PC-9 (cell line): ENCODE measurements at regions of chr18 and their contacts with region 1.

Region 1: DNA sequence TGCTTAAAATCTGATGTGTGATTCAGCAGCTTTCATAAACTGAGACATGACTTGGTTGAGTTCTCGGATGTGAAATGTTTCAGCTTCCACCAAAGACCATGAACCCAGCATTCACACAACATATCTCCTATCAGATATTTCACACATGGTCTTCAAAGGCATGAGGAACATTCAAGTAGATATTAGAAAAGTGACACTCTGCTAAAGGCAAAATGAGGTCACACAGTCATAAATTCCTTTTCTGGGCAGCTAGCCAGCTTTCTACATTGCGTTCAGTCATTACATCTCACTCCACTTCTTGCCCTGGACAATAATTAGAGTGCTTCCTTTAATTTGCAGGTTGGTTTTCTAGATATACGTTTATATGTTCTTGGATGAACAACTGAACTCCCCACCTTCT is 96.7 kb downstream of the GAREM1 start:
- DNase-seq: peak; percentile 32 to 78
- H3K4me3 ChIP-seq: peak overlapping the region; percentile 6; the same call in 1 of the 2 replicates
- H3K27ac ChIP-seq: peak overlapping the region; percentile 97
- H3K4me1 ChIP-seq: peaks cover 73% of the 10 kb centered on the region
- H3K27me3 ChIP-seq: no peaks in the 10 kb centered on the region
- CTCF ChIP-seq: no peak

Region 2: DNA sequence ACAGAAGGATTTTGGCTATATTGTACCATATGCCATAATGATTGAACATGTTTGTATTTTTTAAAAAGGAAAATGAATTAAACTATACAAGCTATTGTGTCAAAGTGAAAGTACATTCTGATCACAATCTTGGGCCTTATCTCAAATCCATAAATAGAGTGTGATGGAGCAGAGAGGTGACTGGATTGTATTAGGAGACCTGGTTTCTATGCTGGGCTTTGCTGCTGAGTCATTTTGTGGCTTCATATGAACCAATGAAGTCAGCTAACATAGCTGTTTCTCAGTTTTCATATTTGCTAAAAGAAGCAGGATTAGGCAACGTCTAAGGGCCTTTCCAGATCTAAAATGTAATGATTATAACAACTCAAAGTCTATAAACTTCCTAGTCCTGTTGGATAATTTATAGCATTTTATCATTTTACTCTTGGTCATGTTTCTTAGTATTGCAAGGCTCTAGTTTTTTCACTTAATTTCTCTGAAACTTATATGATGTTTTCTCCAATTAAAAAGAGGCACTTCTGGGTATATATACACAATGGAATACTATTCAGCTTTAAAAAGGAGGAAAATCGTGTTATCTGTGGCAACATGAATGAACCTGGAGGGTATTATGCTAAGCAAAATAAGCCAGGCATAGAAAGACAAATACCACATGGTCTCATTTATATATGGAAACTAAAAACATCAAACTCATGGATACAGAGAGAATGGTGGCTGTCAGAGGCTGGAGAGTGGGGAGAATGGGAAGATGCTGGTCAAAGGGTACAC is 71.8 kb before region 1 on chr18:
- CTCF ChIA-PET with region 1: no interaction called
- POLR2A ChIA-PET with region 1: no interaction called
- intact Hi-C with region 1: loop called (anchors 2 kb)
- DNase-seq: peak; percentile 24 to 84
- H3K4me3 ChIP-seq: no peak overlapping the region
- H3K27ac ChIP-seq: peak overlapping the region; percentile 84
- H3K4me1 ChIP-seq: peaks cover 20% of the 10 kb centered on the region
- H3K27me3 ChIP-seq: no peaks in the 10 kb centered on the region
- CTCF ChIP-seq: no peak

Region 3: GRCh38 chr18:32455361-32455760 is 81.4 kb after region 1 on chr18:
- CTCF ChIA-PET with region 1: no interaction called
- POLR2A ChIA-PET with region 1: no interaction called
- intact Hi-C with region 1: no loop called
- DNase-seq: no peak
- H3K4me3 ChIP-seq: no peak overlapping the region
- H3K27ac ChIP-seq: no peak overlapping the region
- H3K4me1 ChIP-seq: no peaks in the 10 kb centered on the region
- H3K27me3 ChIP-seq: no peaks in the 10 kb centered on the region
- CTCF ChIP-seq: no peak

Region 4: GRCh38 chr18:32742579-32742978 is 368.6 kb after region 1 on chr18:
- CTCF ChIA-PET with region 1: no interaction called
- POLR2A ChIA-PET with region 1: no interaction called
- intact Hi-C with region 1: no loop called
- DNase-seq: no peak
- H3K4me3 ChIP-seq: no peak overlapping the region
- H3K27ac ChIP-seq: no peak overlapping the region
- H3K4me1 ChIP-seq: no peaks in the 10 kb centered on the region
- H3K27me3 ChIP-seq: no peaks in the 10 kb centered on the region
- CTCF ChIP-seq: no peak